ENCODE measurements at regions of chr18 and their contacts with region 1.

Region 1: DNA sequence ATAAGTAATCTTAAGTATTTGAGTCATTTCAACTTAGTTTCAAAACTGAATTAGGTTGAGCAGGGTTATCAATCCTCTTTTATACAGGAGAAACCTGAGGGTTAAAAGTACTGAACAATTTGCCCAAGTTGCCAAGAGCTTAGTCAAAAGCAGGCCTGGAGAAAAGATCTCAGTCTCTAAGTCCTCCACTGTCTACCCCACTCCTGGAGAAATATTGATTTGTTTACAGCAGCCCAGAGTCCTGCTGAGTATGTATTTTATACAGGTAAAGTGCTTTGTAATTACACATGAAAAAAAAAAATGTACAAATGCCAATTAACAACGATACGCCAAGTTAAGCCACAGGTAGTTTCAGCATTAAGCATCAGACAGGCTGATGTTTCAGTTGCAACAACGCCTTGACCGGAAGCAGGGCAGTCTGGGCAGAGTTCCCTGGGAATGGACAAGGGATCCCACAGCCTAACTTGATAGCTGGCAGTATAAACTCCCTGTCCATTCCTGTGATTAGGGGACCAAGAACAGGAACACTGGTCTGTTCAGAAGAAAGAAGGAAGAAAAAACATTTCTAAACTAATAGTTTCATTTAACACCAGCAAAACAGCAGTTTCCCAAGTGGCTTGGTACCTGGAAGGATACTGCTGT is 132.9 kb downstream of the MYO5B start:
- DNase-seq: no peak
- H3K4me3 ChIP-seq: no peak overlapping the region
- H3K27ac ChIP-seq: peak overlapping the region in 1 of 2 donors; percentile 25
- H3K4me1 ChIP-seq: no peaks in the 10 kb centered on the region
- H3K27me3 ChIP-seq: no peaks in the 10 kb centered on the region
- CTCF ChIP-seq: no peak
- POLR2A ChIP-seq: no peak

Region 2: DNA sequence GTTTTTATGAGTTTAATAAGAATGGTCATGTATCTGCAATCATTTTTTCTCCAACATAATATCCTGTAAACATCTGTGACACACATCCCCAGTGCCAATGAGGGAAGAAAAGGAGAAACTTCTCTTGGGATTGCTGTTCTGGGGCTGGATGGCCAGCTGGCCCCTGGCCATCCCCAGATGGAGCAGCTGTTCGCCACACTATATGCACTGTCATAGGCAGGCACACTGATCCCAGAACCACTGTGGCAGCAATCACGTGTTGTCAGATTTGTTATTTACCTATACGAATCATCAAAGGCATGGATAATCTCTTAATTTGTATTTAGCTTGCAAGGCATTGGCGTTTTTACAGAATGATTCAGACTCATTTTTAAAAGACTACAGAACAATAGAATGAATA is 81.1 kb before region 1 on chr18:
- intact Hi-C with region 1: no loop called
- DNase-seq: no peak
- H3K4me3 ChIP-seq: no peak overlapping the region
- H3K27ac ChIP-seq: no peak overlapping the region
- H3K4me1 ChIP-seq: no peaks in the 10 kb centered on the region
- H3K27me3 ChIP-seq: no peaks in the 10 kb centered on the region
- CTCF ChIP-seq: no peak
- POLR2A ChIP-seq: no peak

Region 3: GRCh38 chr18:50099725-50100407 is 37.9 kb after region 1 on chr18:
- intact Hi-C with region 1: loop called (anchors 2 kb)
- DNase-seq: no peak
- H3K4me3 ChIP-seq: no peak overlapping the region
- H3K27ac ChIP-seq: peak overlapping the region; percentile 66 to 86
- H3K4me1 ChIP-seq: no peaks in the 10 kb centered on the region
- H3K27me3 ChIP-seq: no peaks in the 10 kb centered on the region
- CTCF ChIP-seq: no peak
- POLR2A ChIP-seq: no peak

Region 4: DNA sequence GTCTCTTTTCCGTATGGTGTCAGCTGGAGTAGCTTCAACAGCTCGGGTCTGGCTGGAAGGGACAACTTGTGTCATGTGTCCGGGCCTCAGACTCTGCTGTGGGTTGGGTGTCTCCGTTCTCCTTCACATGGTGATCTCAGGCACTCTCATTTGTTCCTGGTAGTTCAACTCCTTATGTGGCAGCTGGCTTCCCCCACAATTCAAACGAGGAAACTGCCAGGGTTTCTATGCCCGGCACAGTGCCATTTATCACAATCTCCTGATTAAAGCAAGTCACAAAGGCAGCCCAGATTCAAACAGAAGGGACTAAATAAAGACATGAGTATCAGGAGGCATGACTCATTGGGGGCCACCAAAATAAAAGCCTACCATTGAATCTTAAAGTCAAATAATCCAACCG is 735.1 kb after region 1 on chr18:
- intact Hi-C with region 1: loop called (anchors 5 kb)
- DNase-seq: no peak
- H3K4me3 ChIP-seq: no peak overlapping the region
- H3K27ac ChIP-seq: no peak overlapping the region
- H3K4me1 ChIP-seq: no peaks in the 10 kb centered on the region
- H3K27me3 ChIP-seq: peaks cover 0 to 5% of the 10 kb centered on the region in 2 donors
- CTCF ChIP-seq: no peak
- POLR2A ChIP-seq: no peak

Measured in breast epithelium (tissue), 4 donors.